Keratinocyte (primary cell): ENCODE measurements at regions of chr2 and their contacts with region 1.

Region 1: GRCh38 chr2:84807063-84807830 is 73.6 kb downstream of the TRABD2A start:
- DNase-seq: no peak
- H3K4me3 ChIP-seq: no peak overlapping the region
- H3K27ac ChIP-seq: no peak overlapping the region
- H3K4me1 ChIP-seq: no peaks in the 10 kb centered on the region
- H3K27me3 ChIP-seq: no peaks in the 10 kb centered on the region
- CTCF ChIP-seq: no peak

Region 2: DNA sequence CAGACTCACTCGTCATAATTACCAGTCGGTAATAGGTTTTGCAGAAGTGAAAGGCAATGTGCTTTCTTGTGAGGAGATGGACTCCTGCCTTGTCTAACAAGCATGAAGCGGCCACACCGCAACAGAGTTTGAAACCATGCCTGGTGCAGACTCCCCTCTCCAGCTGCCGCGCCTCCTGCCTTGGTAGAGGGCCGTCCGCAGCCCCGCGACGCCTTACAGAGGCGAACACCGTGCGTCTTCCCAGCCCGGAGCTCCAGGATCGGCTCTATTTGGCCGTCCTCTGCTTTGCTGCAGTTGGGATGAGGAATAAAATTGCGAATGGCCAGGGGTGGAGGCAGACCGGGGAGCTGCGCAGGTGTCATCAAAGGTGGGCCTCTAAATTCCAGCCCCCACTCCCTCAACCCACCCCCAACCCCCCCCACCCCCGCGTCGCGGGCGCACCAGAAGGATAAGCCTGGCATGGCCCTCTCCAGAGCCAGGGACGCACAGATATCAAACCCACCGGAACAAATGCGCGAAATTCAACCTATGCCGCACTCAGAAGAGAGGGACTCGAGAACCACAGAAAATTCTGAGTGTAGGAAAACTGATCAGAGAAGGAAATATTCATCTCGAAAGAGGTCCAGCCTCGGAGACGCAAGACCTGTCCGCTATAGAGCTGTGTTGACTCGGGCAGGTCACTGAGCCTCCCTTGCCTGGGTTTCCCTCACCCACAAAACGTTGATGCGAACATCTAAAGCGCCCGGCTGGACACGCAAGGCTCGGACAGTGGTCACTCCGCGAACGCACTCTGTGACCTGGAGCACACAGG is 72.5 kb after region 1 on chr2:
- dilution Hi-C with region 1: loop called (anchors 5 kb)
- DNase-seq: no peak
- H3K4me3 ChIP-seq: peak overlapping the region in 1 of 3 experiments; percentile 71
- H3K27ac ChIP-seq: no peak overlapping the region
- H3K4me1 ChIP-seq: peaks cover 12% of the 10 kb centered on the region
- H3K27me3 ChIP-seq: peaks cover 47% of the 10 kb centered on the region
- CTCF ChIP-seq: no peak

Region 3: DNA sequence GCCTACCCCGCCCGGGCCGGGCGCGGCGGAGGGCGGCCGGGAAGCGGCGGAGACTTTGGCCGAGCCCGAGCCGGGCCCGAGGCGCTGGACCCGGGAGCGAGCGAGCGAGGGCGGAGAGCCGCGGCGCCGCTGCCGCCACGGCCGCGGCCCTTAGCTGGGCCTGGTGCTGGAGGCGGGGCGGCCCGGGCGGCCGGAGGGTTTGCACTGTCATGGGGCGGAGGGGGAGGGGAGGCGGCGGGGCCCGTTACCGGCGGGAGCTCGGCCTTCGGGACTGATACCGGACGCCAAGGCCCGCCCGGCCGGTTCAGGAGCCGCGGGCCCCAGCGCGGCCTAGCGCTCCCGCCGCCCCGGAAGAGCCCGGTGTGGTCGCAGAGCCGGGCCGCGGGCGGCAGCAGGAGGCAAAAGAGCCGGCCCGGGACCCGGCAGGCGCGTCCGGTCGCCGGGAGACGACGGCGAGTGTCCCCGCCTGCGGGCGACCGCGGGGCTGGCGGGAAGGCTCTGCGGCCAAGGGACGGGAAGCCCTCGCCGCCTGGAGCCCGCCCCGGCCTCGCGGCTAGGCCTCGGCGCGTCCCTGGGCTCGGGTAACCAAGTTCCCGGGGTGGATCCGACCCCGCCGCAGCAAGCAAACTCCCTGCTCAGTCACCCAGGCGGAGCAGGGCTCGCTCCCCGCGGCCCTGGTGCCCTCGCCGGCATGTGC is 164.4 kb after region 1 on chr2:
- dilution Hi-C with region 1: no loop called
- DNase-seq: no peak
- H3K4me3 ChIP-seq: peak overlapping the region; percentile 77 to 82 (median 79)
- H3K27ac ChIP-seq: peak overlapping the region; percentile 94
- H3K4me1 ChIP-seq: peaks cover 12% of the 10 kb centered on the region
- H3K27me3 ChIP-seq: no peaks in the 10 kb centered on the region
- CTCF ChIP-seq: no peak